ENCODE measurements at regions of chr2 and their contacts with region 1.

Region 1: GRCh38 chr2:158024288-158024898 is 77.3 kb upstream of the UPP2 start:
- H3K4me3 Mint-ChIP-seq: no peak overlapping the region
- H3K27ac Mint-ChIP-seq: no peak overlapping the region
- H3K4me1 Mint-ChIP-seq: no peaks in the 10 kb centered on the region
- H3K27me3 Mint-ChIP-seq: no peaks in the 10 kb centered on the region

Region 2: DNA sequence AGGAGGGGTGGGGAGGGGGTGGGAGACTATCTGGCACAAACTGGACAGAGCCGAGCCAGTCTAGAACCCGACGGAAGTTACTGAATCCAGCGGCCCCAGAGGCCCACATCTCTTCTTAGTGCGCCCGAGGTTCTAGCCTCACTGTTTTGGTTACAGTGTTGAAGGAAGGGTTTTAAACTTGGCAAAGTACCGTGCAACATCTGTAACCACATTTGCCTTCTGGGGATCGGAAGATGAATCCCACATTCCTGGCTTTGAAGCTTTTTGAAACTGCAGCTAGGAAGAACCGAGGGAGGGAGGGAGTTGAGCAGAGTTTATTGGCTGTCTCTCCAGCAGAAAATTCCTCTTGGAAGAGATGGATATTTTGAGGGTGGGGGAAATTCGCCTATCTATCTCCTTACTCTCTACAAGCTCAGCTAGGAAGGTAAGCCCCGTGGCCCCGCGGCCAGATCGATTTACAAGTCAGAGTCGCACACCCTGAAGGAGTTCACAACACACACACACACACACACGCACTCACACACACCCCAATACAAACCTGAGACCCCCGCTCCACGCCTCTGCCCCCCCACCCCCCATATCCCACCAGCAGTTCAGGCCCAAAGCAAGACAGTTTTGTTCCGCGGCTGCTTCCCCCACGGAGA is 149.3 kb before region 1 on chr2:
- intact Hi-C with region 1: no loop called
- H3K4me3 Mint-ChIP-seq: peak overlapping the region; percentile 84
- H3K27ac Mint-ChIP-seq: peak overlapping the region; percentile 80
- H3K4me1 Mint-ChIP-seq: peaks cover 45% of the 10 kb centered on the region
- H3K27me3 Mint-ChIP-seq: no peaks in the 10 kb centered on the region

Region 3: DNA sequence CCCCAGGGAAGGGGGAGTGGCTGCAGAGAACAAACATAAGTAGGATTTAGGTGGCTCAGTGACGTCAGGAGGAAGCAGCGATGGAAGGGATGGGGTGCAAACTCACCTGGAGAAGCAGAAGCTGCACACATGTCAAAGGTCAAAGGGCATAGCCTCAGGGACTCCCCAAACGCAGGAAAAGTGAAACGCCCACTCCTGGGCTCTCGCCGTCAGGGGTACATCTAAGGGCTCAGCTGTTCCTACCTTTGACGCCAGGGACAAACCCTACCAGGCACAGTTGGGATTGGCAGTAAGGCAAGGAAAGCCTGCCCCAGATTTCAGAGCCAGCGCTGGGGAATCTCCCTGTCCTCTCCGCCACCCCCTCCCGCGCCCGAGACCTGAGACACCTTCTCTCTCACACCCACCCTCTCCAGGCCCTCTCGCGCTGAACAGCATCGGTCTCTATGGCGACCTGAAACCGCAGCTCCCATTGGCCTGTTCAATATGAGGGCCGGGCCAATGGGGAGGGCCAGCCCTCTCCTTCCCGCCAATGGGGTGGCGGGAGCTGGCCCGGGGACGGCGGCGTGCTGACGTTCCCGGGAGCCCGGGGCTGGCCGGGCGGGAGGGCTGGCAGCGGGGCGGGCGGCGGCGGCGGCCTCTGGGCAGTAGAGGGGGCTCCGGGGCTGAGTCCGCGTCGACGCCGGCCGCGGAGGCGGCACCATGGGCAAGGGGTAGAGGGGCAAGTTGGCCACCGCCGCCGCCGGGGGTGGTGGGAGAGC is 432.1 kb after region 1 on chr2 and contains the starts of genes CCDC148 and PKP4:
- intact Hi-C with region 1: loop called (anchors 5 kb)
- H3K4me3 Mint-ChIP-seq: peak within 1 kb of the TSS; percentile 98
- H3K27ac Mint-ChIP-seq: peak within 1 kb of the TSS; percentile 96
- H3K4me1 Mint-ChIP-seq: peaks cover 22% of the 10 kb centered on the region
- H3K27me3 Mint-ChIP-seq: peaks cover 34% of the 10 kb centered on the region

Region 4: DNA sequence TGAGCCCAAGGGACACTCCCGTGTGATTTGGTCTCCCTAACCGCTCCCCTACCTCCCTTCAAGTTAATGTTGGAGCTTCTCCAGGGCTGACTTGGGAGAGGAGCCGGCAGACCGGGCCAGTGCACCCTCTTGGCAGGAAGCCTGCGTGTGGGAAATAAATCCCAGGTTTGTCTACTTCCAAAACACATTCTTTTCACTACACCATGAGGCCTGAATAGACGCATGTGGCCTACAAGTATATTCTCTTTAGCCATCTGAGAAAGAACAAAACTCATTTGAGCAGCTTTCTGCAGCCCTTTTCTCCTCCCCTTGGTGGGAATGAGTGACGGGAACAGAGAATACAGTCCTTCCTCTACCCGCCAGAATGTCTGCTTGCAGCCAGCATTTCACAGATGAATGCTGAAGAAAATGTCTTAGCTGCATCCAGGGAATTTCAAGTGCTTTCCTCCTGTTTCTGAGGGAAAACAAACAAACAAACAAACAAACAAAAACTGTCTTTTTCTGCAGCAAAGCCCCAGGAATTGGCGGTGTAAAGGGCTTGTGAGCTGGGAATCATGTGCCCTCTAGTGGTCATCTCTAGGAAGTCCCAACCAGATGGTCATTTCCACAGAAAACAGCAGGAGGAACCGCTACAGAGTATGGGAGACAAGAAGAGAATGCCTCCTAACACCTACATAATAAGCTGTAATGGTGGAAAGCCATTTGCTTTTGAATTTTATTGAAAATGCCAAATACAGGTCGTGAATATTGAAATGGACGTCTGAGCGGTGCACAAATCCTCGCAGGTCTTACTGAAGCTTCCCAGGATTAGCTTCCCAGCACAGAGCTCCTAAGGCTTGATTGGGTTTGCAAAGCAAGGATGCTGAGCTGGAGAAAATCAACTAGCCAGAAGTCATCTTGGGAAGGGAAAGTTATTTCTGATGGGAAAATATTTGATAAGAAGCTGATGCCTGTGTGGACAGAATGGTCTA is 729.5 kb after region 1 on chr2:
- intact Hi-C with region 1: loop called (anchors 1 kb)
- H3K4me3 Mint-ChIP-seq: no peak overlapping the region
- H3K27ac Mint-ChIP-seq: no peak overlapping the region
- H3K4me1 Mint-ChIP-seq: no peaks in the 10 kb centered on the region
- H3K27me3 Mint-ChIP-seq: no peaks in the 10 kb centered on the region

Measured in dendritic cell treated with granulocyte-macrophage colony-stimulating factor and Interleukin-4, amounts not matched to agents 40 ng/mL and 50 ng/mL, for 4 days (primary cell).